Posterior vena cava (tissue), 2 donors: ENCODE measurements at regions of chr17 and their contacts with region 1.

Region 1: GRCh38 chr17:16438557-16439302 is 23.4 kb downstream of the TRPV2 start:
- DNase-seq: peak; percentile 98

Region 2: DNA sequence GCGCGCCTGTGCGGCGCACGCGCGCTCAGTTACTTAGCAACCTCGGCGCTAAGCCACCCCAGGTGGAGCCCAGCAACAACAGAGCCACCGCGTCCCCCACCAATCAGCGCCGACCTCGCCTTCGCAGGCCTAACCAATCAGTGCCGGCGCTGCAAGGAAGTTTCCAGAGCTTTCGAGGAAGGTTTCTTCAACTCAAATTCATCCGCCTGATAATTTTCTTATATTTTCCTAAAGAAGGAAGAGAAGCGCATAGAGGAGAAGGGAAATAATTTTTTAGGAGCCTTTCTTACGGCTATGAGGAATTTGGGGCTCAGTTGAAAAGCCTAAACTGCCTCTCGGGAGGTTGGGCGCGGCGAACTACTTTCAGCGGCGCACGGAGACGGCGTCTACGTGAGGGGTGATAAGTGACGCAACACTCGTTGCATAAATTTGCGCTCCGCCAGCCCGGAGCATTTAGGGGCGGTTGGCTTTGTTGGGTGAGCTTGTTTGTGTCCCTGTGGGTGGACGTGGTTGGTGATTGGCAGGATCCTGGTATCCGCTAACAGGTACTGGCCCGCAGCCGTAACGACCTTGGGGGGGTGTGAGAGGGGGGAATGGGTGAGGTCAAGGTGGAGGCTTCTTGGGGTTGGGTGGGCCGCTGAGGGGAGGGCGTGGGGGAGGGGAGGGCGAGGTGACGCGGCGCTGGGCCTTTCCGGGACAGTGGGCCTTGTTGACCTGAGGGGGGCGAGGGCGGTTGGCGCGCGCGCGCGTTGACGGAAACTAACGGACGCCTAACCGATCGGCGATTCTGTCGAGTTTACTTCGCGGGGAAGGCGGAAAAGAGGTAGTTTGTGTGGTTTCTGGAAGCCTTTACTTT is 57.9 kb before region 1 on chr17 and contains the start of gene UBB:
- intact Hi-C with region 1: loop called in 1 of 2 experiments (anchors 10 kb)
- DNase-seq: peak; percentile 99
- total RNA-seq, gene UBB: 581 to 633 TPM

Region 3: DNA sequence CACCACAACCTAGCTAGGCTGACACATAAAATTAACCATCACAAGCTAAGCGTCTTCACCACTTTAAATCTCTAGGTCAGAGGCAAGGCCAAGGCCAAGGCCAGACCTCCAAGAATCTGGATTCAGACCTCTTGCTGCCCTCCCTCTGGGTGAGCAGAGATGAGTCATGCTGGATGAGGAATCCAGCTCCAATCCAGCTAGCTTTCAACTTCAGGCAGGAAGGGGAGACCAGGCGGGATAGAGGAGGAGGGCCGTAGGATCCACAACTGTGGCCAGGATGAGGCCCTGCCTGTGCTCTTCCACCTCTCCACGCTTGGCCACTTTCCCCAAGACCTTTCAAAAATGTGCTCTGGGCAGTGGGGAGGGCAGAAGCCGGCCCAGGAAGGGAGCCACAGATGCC is 38.5 kb after region 1 on chr17:
- intact Hi-C with region 1: no loop called
- DNase-seq: no peak

Region 4: DNA sequence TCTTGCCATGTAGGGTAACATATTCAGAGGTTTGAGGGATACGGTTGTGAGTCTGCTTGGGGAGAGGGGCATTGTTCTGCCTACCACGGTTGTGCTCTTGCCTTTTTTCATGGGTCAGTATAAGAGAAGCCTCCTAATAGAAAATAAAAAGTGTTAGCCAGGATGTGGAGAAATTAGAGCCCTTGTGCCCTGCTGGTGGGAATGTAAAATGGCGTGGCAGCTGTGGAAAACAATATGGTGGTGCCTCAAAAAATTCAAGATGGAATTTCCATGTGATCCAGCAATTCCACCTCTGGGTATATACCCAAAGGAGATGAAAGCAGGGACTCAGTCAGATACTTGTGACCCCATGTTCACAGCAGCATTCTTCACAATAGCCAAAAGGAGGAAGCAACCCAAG is 67.5 kb after region 1 on chr17:
- intact Hi-C with region 1: no loop called
- DNase-seq: no peak

Region 5: DNA sequence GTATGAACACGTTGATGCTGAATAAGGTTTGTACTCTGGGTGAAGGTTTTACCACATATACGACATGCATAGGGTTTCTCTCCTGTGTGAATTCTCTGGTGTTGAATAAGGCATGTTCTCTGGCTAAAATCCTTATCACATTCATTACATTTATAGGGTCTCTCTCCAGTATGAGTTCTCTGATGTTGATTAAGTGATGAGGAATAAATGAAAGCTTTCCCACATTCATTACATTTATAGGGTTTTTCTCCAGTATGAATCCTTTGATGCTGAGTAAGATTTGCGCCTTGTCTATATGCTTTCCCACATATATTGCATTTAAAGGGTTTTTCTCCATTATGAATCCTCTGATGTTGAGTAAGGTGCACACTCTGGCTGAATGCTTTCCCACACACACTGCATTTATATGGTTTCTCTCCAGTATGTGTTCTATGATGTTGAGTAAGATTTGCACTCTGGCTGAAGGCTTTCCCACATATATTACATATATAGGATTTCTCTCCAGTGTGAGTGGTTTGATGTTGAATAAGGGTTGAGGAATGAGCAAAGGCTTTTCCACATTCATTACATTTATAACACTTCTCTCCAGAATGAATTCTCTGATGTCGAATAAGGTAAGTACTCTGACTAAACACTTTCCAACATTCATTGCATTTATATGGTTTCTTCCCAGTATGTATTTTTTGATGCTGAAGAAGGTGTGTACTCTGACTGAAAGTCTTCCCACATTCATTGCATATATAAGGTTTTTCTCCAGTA is 113.3 kb after region 1 on chr17:
- intact Hi-C with region 1: no loop called
- DNase-seq: no peak

Region 6: GRCh38 chr17:17467720-17468119 is 1029.0 kb after region 1 on chr17:
- intact Hi-C with region 1: no loop called
- DNase-seq: no peak